ENCODE measurements at regions of chr17 and their contacts with region 1.

Region 1: GRCh38 chr17:81601525-81602120 is 35.3 kb downstream of the NPLOC4 start:
- DNase-seq: peak; percentile 52
- H3K4me3 ChIP-seq: no peak overlapping the region
- H3K27ac ChIP-seq: no peak overlapping the region
- H3K4me1 ChIP-seq: no peaks in the 10 kb centered on the region
- H3K27me3 ChIP-seq: no peaks in the 10 kb centered on the region
- CTCF ChIP-seq: peak; percentile 52 to 87 (median 79)
- POLR2A ChIP-seq: no peak

Region 2: DNA sequence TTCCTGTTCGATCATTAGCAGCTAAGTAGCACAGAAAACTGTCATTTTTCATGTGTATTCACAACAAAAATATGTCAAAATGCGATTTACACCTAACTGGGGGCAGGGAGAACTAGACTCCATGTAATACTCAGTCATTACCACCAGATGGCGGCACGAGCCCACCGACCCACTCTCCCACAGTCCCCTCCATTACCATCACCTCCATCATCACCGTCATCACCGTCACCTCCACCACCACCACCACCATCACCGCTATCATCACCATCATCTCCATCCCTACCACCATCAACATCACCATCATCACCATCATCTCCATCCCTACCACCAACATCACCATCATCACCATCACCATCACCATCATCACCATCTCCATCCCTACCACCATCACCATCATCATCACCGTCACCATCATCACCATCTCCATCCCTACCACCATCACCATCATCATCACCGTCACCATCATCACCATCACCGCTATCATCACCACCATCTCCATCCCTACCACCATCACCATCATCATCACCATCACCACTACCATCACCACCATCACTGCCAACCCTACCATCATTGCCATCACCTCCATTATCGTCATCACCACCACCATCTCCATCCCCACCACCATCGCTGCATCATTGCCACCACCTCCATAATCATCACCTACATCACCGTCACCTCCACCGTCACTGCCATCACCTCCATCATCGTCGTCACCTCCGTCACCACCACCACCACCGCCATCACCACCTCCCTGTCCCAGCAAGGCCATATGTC is 348.1 kb before region 1 on chr17:
- intact Hi-C with region 1: loop called (anchors 5 kb)
- DNase-seq: peak; percentile 37
- H3K4me3 ChIP-seq: no peak overlapping the region
- H3K27ac ChIP-seq: no peak overlapping the region
- H3K4me1 ChIP-seq: peaks cover 7% of the 10 kb centered on the region
- H3K27me3 ChIP-seq: no peaks in the 10 kb centered on the region
- CTCF ChIP-seq: peak; percentile 76 to 93 (median 88)
- POLR2A ChIP-seq: no peak

Region 3: GRCh38 chr17:81512560-81513371 is 88.9 kb before region 1 on chr17 and contains the start of gene ACTG1:
- intact Hi-C with region 1: loop called (anchors 5 kb)
- DNase-seq: peak; percentile 93
- H3K4me3 ChIP-seq: peak within 1 kb of the TSS; percentile 89 to 97
- H3K27ac ChIP-seq: peak within 1 kb of the TSS; percentile 100
- H3K4me1 ChIP-seq: peaks cover 5% of the 10 kb centered on the region
- H3K27me3 ChIP-seq: no peaks in the 10 kb centered on the region
- CTCF ChIP-seq: no peak
- POLR2A ChIP-seq: peak; percentile 93
- total RNA-seq, gene ACTG1: 2,438 to 3,181 TPM

Region 4: GRCh38 chr17:81553018-81553615 is 48.5 kb before region 1 on chr17:
- intact Hi-C with region 1: loop called (anchors 5 kb)
- DNase-seq: peak; percentile 73
- H3K4me3 ChIP-seq: peak overlapping the region; percentile 94 to 96
- H3K27ac ChIP-seq: peak overlapping the region; percentile 71 to 83
- H3K4me1 ChIP-seq: peaks cover 4% of the 10 kb centered on the region
- H3K27me3 ChIP-seq: no peaks in the 10 kb centered on the region
- CTCF ChIP-seq: no peak
- POLR2A ChIP-seq: no peak

Measured in prostate gland (tissue), 2 donors.